Right ventricle myocardium superior (tissue), 1 donor: ENCODE measurements at regions of chr17 and their contacts with region 1.

Region 1: GRCh38 chr17:82037113-82037888 is at the start of gene DCXR:
- DNase-seq: peak; percentile 99
- ATAC-seq: peak; percentile 98
- total RNA-seq, gene DCXR: 178 TPM

Region 2: GRCh38 chr17:82098072-82098821 is 60.9 kb after region 1 on chr17 and contains the start of gene FASN:
- intact Hi-C with region 1: loop called (anchors 5 kb)
- DNase-seq: peak; percentile 96
- ATAC-seq: peak; percentile 82
- total RNA-seq, gene FASN: 23.0 TPM

Region 3: GRCh38 chr17:82180776-82181528 is 143.7 kb after region 1 on chr17:
- intact Hi-C with region 1: no loop called
- DNase-seq: no peak
- ATAC-seq: no peak